ENCODE measurements at regions of chr1 and their contacts with region 1.

Region 1: GRCh38 chr1:179081687-179082332 is at the start of gene TOR3A:
- DNase-seq: peak; percentile 80 to 97 (median 91)
- H3K4me3 ChIP-seq: peak within 1 kb of the TSS; percentile 62 to 100 (median 93)
- H3K27ac ChIP-seq: peak within 1 kb of the TSS in 57 of 59 donors; percentile 3 to 90 (median 75)
- H3K27me3 ChIP-seq: no peaks in the 10 kb centered on the region
- CTCF ChIP-seq: peak in 33 of 56 donors; percentile 2 to 47 (median 24)
- total RNA-seq, gene TOR3A: 11.7 to 24.9 (median 16.3) TPM

Region 2: GRCh38 chr1:178612261-178612660 is 469.5 kb before region 1 on chr1:
- intact Hi-C with region 1: no loop called
- DNase-seq: no peak
- H3K4me3 ChIP-seq: no peak overlapping the region
- H3K27ac ChIP-seq: no peak overlapping the region
- H3K27me3 ChIP-seq: no peaks in the 10 kb centered on the region
- CTCF ChIP-seq: no peak

Region 3: DNA sequence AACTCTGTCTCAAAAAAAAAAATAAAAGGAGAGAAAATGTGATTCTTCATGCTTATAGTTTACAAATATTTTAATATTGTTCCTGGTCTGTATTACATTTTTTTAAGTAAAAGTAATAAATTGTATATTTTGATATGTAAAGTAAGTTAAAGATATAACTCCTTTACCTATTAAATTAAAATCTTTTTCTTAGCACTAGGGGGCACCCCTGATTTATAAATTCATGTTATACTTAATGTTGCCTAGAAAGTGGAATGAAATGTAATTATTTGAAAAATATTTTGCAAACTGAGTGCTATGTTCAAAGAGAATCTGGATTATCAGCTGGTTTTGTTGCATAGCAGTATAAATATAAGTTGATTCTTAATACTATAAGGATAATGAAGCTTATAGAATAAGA is 307.5 kb before region 1 on chr1:
- intact Hi-C with region 1: no loop called
- DNase-seq: no peak
- H3K4me3 ChIP-seq: no peak overlapping the region
- H3K27ac ChIP-seq: no peak overlapping the region
- H3K27me3 ChIP-seq: no peaks in the 10 kb centered on the region
- CTCF ChIP-seq: peak; percentile 31 to 77 (median 55)

Region 4: GRCh38 chr1:179016747-179017549 is 64.9 kb before region 1 on chr1:
- intact Hi-C with region 1: loop called in 1 of 2 experiments (anchors 5 kb)
- DNase-seq: peak; percentile 18 to 88 (median 80)
- H3K4me3 ChIP-seq: peak overlapping the region in 21 of 59 donors; percentile 4 to 44 (median 22)
- H3K27ac ChIP-seq: peak overlapping the region in 57 of 59 donors; percentile 14 to 88 (median 68)
- H3K27me3 ChIP-seq: no peaks in the 10 kb centered on the region
- CTCF ChIP-seq: peak in 9 of 56 donors; percentile 12 to 28 (median 14)

Region 5: GRCh38 chr1:179190861-179191260 is 109.1 kb after region 1 on chr1:
- intact Hi-C with region 1: loop called in 1 of 2 experiments (anchors 5 kb)
- DNase-seq: no peak
- H3K4me3 ChIP-seq: no peak overlapping the region
- H3K27ac ChIP-seq: peak overlapping the region in 5 of 59 donors; percentile 5 to 48 (median 41)
- H3K27me3 ChIP-seq: no peaks in the 10 kb centered on the region
- CTCF ChIP-seq: no peak

Region 6: DNA sequence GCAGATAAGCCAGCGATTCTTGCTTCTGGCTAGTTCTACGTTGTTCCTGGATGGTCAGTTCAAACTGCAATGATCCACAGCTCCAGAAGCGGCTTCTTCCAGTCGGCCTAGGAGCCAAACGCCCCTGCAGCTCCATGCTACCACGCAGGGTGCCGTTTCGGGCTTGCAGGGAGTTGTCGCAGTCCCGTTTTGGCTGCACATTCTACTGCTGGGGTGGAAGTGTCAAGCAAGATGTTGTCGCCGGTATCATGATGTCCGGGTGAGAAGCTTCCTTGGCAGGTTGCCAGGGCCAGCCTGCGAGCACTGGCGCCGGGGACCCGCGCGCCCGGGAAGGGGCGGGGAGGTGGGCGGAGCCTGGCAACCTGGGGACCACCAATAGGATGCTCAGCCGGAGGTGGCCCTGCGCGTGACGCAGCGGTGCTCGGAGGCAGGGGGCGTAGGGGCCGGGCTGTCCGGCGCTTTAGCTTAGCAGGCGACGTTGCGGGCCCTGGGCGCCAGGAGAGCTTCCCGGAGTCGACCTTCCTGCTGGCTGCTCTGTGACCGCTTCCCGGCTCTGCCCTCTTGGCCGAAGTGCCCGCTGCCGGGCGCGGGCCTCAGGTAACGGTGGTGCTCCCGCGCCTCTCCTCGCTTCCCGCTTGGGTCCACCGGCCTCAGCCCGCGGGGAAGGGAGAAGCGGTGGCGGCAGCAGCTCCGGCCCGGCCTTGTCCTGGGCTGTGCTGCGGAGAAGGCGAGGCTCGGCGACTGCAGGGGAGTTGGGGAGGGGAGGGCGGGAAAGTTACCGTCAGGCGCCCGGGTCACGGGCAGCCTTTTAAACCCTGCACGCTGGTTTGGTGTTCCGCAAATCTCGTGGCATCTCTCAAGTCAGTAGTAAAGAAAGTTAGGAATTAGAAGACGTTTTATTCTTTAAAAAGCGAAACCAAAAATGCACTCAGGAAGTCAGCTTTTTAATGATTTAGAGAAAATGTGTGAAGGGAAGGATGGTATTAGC is 211.8 kb after region 1 on chr1 and contains the start of gene SOAT1:
- intact Hi-C with region 1: loop called (anchors 2 to 5 kb)
- DNase-seq: peak; percentile 88 to 98 (median 95)
- H3K4me3 ChIP-seq: peak within 1 kb of the TSS; percentile 64 to 96 (median 85)
- H3K27ac ChIP-seq: peak within 1 kb of the TSS; percentile 54 to 94 (median 85)
- H3K27me3 ChIP-seq: no peaks in the 10 kb centered on the region
- CTCF ChIP-seq: peak in 48 of 56 donors; percentile 3 to 66 (median 40)
- total RNA-seq, gene SOAT1: 10.1 to 31.3 (median 18.6) TPM

Region 7: GRCh38 chr1:179298952-179299351 is 217.1 kb after region 1 on chr1:
- intact Hi-C with region 1: loop called (anchors 2 to 5 kb)
- DNase-seq: no peak
- H3K4me3 ChIP-seq: no peak overlapping the region
- H3K27ac ChIP-seq: no peak overlapping the region
- H3K27me3 ChIP-seq: no peaks in the 10 kb centered on the region
- CTCF ChIP-seq: no peak

Region 8: GRCh38 chr1:179365320-179366092 is 283.7 kb after region 1 on chr1 and contains the start of gene AXDND1:
- intact Hi-C with region 1: loop called (anchors 2 to 5 kb)
- DNase-seq: peak; percentile 45 to 86 (median 78)
- H3K4me3 ChIP-seq: peak within 1 kb of the TSS; percentile 63 to 95 (median 76)
- H3K27ac ChIP-seq: peak within 1 kb of the TSS in 58 of 59 donors; percentile 47 to 97 (median 88)
- H3K27me3 ChIP-seq: no peaks in the 10 kb centered on the region
- CTCF ChIP-seq: peak in 40 of 56 donors; percentile 15 to 67 (median 44)
- total RNA-seq, gene AXDND1: 0.25 to 3.1 (median 0.96) TPM in 98 of 120 experiments, not detected in the others

Region 9: DNA sequence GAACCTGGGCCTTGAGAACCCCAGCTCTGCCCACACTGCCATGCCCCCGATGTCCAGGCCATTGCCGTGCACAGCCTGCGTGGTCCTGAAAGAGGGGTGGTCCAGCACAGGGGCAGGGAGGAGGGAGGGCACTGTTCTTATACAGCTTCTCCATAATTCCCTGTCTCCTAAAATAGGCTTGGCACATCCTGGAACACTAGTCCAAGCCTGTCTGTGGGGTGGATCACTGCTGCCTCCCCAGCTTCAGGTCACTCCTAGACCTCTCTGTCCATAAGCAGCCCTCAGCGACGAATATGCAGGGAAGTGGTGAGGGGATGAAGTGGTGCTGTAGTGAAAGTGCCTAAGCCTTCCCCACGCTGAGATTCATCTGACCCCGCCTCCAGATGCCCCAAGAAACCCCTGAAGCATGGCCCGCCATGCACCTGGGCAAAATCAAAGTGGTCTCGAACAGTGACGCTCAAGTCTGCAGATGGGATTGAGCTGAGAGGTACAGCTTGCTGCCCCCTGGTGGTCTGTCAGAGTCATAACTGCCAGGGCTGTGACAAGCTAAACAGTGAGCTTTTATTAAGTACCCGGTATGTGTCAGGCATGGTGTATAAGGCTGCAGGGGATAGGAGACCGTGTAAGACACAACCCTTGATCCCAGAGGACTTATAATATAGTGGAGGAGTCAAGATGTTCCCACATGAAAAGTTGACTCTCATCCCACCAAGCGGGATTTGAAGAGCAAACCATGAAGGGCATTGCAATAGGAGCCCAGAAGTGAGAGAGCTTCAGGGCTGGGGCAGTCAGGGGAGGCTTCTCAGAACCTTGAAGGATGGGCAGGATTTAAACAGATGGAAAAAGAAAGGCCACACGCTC is 727.9 kb after region 1 on chr1:
- intact Hi-C with region 1: loop called in 1 of 2 experiments (anchors 5 kb)
- DNase-seq: peak in 8 of 10 donors; percentile 50 to 77 (median 61)
- H3K4me3 ChIP-seq: peak overlapping the region in 7 of 59 donors; percentile 12 to 38 (median 24)
- H3K27ac ChIP-seq: no peak overlapping the region
- H3K27me3 ChIP-seq: no peaks in the 10 kb centered on the region
- CTCF ChIP-seq: peak; percentile 74 to 97 (median 92)

Measured in dorsolateral prefrontal cortex (tissue), 120 donors.